Heart right ventricle (tissue), 16 donors: ENCODE measurements at regions of chr7 and their contacts with region 1.

Region 1: DNA sequence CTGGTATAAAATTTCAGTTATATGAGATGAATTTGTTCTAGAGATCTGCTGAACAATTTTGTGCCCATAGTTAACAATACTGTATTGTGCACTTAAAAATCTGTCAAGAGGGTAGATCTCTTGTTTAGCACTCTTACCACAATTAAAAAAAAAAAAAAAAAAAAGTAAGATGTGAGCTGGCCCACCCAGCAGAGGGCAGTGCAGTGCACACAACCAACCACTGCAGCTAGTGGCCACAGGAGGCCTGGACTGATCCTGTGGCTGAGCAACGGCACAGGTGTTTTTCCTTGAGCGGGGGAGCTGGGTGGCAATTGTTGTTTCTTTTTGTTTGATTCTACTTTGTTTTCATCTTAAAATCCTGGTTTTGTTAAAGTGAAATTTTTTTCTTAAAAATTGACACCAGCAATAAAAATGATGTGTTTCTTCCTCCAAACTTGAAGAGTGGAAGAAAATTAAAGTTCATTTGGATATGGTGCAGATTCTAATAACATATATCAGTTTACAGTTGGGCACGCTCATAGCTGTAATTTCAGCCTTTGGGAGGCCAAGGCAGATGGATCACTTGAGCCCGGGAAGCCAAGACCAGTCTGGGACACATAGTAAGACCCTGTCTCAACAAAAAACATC is 171.1 kb upstream of the TBX20 start:
- DNase-seq: peak; percentile 55 to 64
- ATAC-seq: peak; percentile 57 to 78 (median 72)
- H3K4me3 ChIP-seq: no peak overlapping the region
- H3K27ac ChIP-seq: no peak overlapping the region
- H3K4me1 ChIP-seq: peaks cover 0 to 10% (median 0%) of the 10 kb centered on the region in 9 donors
- H3K27me3 ChIP-seq: no peaks in the 10 kb centered on the region
- CTCF ChIP-seq: peak; percentile 58 to 80 (median 76)

Region 2: GRCh38 chr7:35519971-35520809 is 95.2 kb after region 1 on chr7:
- intact Hi-C with region 1: loop called (anchors 1 to 10 kb)
- DNase-seq: peak; percentile 71 to 86
- ATAC-seq: peak; percentile 80 to 91 (median 86)
- H3K4me3 ChIP-seq: no peak overlapping the region
- H3K27ac ChIP-seq: peak overlapping the region in 3 of 10 donors; percentile 40 to 41 (median 40)
- H3K4me1 ChIP-seq: peaks cover 0 to 24% (median 20%) of the 10 kb centered on the region in 9 donors
- H3K27me3 ChIP-seq: peaks cover 0 to 8% (median 0%) of the 10 kb centered on the region in 7 donors
- CTCF ChIP-seq: peak; percentile 69 to 92 (median 88)

Region 3: GRCh38 chr7:35537067-35538023 is 112.4 kb after region 1 on chr7:
- intact Hi-C with region 1: loop called in 1 of 10 experiments (anchors 5 kb)
- DNase-seq: peak; percentile 75 to 84
- ATAC-seq: peak; percentile 96 to 98 (median 97)
- H3K4me3 ChIP-seq: peak overlapping the region in 9 of 10 donors; percentile 33 to 55 (median 51)
- H3K27ac ChIP-seq: no peak overlapping the region
- H3K4me1 ChIP-seq: peaks cover 0 to 12% (median 7%) of the 10 kb centered on the region in 9 donors
- H3K27me3 ChIP-seq: peaks cover 0 to 8% (median 4%) of the 10 kb centered on the region in 7 donors
- CTCF ChIP-seq: peak; percentile 81 to 97 (median 94)

Region 4: GRCh38 chr7:35576031-35576573 is 151.1 kb after region 1 on chr7:
- intact Hi-C with region 1: no loop called
- DNase-seq: peak in 1 of 2 donors; percentile 6
- ATAC-seq: peak in 1 of 8 donors; percentile 38
- H3K4me3 ChIP-seq: no peak overlapping the region
- H3K27ac ChIP-seq: no peak overlapping the region
- H3K4me1 ChIP-seq: peaks cover 0 to 13% (median 0%) of the 10 kb centered on the region in 9 donors
- H3K27me3 ChIP-seq: no peaks in the 10 kb centered on the region
- CTCF ChIP-seq: no peak

Region 5: GRCh38 chr7:35624299-35625186 is 199.6 kb after region 1 on chr7:
- intact Hi-C with region 1: loop called in 8 of 10 experiments (anchors 5 to 10 kb)
- DNase-seq: peak; percentile 10 to 18
- ATAC-seq: peak; percentile 68 to 88 (median 86)
- H3K4me3 ChIP-seq: no peak overlapping the region
- H3K27ac ChIP-seq: no peak overlapping the region
- H3K4me1 ChIP-seq: peaks cover 0 to 8% (median 6%) of the 10 kb centered on the region in 9 donors
- H3K27me3 ChIP-seq: no peaks in the 10 kb centered on the region
- CTCF ChIP-seq: peak; percentile 72 to 89 (median 86)

Region 6: GRCh38 chr7:35647171-35647574 is 222.2 kb after region 1 on chr7:
- intact Hi-C with region 1: no loop called
- DNase-seq: peak in 1 of 2 donors; percentile 21
- ATAC-seq: peak; percentile 60 to 84 (median 72)
- H3K4me3 ChIP-seq: peak overlapping the region in 1 of 10 donors; percentile 0
- H3K27ac ChIP-seq: peak overlapping the region in 9 of 10 donors; percentile 0 to 67 (median 47)
- H3K4me1 ChIP-seq: peaks cover 16 to 62% (median 46%) of the 10 kb centered on the region in 9 donors
- H3K27me3 ChIP-seq: no peaks in the 10 kb centered on the region
- CTCF ChIP-seq: no peak